ENCODE measurements at regions of chr10 and their contacts with region 1.

Region 1: DNA sequence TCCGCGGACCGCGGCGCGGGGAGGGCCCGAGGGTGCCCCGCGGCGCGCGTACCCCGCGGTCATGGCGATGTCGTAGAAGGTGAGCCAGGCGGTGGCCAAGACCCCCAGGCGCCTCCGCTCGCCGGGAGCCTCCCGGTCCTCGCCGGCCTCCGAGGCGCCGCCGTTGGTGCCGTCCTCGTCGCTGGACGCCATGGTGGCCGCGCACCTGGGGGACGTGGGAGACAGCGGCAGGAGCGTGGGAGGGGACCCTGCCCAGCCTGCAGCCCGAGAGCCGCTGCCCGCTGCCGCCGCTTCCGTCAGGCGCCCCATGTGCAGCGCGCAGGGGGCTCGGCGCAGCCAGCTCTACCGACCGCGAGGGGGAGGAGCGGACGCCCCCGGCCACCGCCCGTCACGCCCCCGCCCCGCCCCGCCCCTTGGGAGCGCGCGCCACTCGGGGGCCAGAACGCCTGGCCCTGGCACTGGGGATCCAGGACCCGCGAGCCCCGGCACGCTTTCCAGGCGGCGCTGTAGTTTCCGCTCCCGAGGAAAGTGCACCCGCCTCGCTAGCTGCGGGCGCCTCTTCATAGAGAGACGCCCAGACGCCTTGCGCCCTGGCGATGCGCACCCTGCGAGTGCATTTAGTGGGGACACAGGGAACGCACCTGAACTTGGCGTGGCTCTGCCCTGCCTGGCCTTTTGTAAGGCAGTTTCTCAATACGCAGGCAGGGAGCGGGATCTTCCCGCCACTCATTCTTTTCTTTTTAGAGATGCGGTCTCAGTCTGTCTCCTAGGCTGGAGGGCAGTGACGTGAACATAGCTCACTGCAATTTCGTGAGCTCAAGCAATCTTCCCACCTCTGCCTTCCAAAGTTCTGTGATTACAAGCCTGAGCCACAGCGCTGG is at the start of gene HACD1:
- DNase-seq: peak; percentile 73
- CTCF ChIP-seq: no peak

Region 2: GRCh38 chr10:17292375-17292774 is 324.9 kb before region 1 on chr10:
- in situ Hi-C with region 1: no loop called
- DNase-seq: no peak
- CTCF ChIP-seq: no peak

Region 3: DNA sequence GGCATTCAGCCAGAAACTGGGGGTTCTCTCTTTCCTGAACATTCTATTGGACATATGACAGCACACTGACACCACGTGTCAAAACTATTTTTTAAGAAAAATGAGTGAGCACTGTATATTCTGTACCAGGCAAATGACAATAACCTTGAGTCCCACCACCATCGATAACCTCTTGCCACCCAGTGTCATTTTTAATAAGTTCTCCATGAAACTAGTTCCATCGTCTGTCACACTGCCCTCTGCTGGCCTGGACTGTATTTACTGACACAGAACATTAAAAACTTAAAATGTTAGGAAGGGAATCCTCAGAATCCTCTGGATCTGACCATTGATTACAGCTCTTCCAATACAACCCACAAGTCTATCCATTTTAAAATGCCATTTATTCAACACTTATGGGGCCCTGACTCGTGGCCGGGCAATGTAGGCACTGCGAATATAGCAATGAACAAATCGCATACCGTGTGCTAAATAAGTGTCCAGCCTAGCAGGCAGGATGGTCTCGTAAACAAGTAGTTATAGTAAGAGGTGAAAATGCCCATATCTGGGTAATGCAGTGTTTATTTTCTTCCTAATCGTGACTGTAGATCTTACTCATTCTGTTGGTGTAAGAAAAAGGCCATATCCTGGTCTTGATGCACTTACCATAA is 487.1 kb after region 1 on chr10:
- in situ Hi-C with region 1: loop called (anchors 25 kb)
- DNase-seq: peak; percentile 35
- CTCF ChIP-seq: peak; percentile 65

Region 4: GRCh38 chr10:18238870-18239485 is 621.7 kb after region 1 on chr10:
- in situ Hi-C with region 1: loop called (anchors 25 kb)
- DNase-seq: peak; percentile 35
- CTCF ChIP-seq: peak; percentile 31

Measured in GM13976 (cell line).